ENCODE measurements at regions of chr13 and their contacts with region 1.

Region 1: DNA sequence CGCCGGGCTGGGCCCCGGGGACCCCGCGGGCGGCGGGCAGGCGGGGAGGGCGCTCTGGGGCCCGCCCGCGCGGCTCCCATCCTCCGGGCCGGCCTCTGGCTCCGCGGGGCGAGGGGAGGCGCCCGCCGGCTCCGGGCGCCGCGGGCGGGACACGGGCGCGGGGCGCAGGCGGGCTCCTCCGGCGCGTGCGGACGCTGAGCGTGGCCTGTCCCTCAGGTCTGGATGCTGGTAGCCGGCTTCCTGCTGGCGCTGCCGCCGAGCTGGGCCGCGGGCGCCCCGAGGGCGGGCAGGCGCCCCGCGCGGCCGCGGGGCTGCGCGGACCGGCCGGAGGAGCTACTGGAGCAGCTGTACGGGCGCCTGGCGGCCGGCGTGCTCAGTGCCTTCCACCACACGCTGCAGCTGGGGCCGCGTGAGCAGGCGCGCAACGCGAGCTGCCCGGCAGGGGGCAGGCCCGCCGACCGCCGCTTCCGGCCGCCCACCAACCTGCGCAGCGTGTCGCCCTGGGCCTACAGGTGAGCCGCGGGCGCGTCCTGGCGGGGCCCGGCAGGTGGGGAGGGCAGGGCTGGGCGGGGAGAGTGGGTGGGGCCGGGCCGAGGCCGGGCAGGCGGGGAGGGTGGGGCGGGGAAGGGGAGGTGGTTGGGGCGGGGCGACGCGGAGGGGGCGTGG is 414 bp downstream of the IL17D start:
- DNase-seq: peak; percentile 92
- H3K4me3 Mint-ChIP-seq: no peak overlapping the region
- H3K27ac Mint-ChIP-seq: no peak overlapping the region
- H3K4me1 Mint-ChIP-seq: peaks cover 10% of the 10 kb centered on the region
- H3K27me3 Mint-ChIP-seq: peaks cover 41% of the 10 kb centered on the region

Region 2: DNA sequence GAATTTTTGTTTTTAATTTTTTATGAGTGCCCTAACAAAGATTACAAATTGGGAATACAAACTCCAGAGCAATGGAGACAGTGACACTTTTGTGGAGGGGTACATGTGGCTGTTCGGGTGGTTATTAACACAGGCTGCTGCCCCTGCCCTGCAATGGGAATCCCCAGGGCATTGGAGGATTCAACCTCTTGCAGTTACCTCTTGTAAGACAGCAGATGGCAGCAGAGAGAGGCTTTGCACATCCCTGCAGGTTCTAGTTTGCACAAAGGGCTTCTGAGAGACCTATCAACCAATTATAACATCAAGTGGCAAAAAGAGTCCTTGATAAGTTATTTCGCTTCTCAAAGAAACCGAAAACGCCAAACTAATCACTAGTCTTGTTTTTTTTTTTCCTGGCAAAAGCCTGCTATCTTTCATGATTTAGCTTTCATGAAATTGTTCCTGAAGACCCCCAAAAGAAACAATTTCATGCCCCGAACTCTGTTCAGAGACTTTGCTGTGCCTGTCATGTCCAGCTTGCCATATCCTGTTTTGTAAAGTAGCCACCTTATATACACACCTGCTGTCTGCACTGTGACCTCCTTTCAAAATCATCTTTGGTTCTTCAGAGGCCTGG is 521.6 kb before region 1 on chr13:
- intact Hi-C with region 1: loop called (anchors 5 kb)
- DNase-seq: peak; percentile 85
- H3K4me3 Mint-ChIP-seq: no peak overlapping the region
- H3K27ac Mint-ChIP-seq: no peak overlapping the region
- H3K4me1 Mint-ChIP-seq: no peaks in the 10 kb centered on the region
- H3K27me3 Mint-ChIP-seq: peaks cover 47% of the 10 kb centered on the region

Region 3: GRCh38 chr13:20495082-20496023 is 208.6 kb before region 1 on chr13:
- intact Hi-C with region 1: loop called (anchors 5 kb)
- DNase-seq: peak; percentile 90
- H3K4me3 Mint-ChIP-seq: no peak overlapping the region
- H3K27ac Mint-ChIP-seq: no peak overlapping the region
- H3K4me1 Mint-ChIP-seq: no peaks in the 10 kb centered on the region
- H3K27me3 Mint-ChIP-seq: no peaks in the 10 kb centered on the region

Region 4: GRCh38 chr13:20566898-20567874 is 136.7 kb before region 1 on chr13 and contains the start of gene IFT88:
- intact Hi-C with region 1: loop called (anchors 2 kb)
- DNase-seq: peak; percentile 97
- H3K4me3 Mint-ChIP-seq: peak within 1 kb of the TSS; percentile 91
- H3K27ac Mint-ChIP-seq: peak within 1 kb of the TSS; percentile 88
- H3K4me1 Mint-ChIP-seq: peaks cover 23% of the 10 kb centered on the region
- H3K27me3 Mint-ChIP-seq: no peaks in the 10 kb centered on the region
- total RNA-seq, gene IFT88: 2.2 and 2.9 TPM in 2 replicates

Region 5: DNA sequence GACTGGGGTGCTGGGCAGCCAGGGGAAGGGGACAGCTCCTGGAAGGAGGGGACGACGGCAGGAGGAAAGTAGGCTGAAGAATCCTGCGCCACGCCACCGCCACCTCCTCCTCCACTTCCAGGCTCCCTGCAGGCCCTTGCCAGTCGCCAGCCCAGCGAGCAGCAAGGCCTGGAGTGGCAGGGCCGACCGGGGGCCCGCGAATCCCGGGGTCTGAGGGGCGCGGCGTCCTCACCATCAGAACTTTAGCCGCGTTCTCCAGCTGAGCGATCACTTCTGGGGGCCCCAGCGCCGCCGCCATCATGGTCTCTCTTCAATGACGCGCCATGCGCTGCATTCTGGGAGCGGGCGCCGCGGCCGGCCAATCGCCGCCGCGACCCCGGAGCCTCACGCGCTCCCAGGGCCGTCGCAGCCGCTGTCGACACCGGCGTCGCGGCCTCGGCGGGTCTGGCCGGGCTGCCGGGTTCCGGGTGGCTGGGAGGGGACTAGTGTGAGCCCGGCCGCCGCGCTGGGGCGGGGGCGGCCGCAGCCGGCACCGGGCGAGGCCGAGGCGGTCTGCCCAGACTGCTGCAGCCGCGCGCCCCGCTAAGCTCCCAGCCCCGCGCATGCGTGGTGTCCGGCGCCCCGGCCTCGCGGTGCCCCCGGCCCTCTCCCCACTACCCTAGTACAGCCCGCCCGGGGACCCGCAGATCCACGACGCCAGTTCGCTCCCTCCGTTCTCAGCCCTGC is 198.7 kb after region 1 on chr13 and contains the start of gene XPO4:
- intact Hi-C with region 1: loop called (anchors 10 kb)
- DNase-seq: peak; percentile 95
- H3K4me3 Mint-ChIP-seq: peak within 1 kb of the TSS; percentile 99
- H3K27ac Mint-ChIP-seq: peak within 1 kb of the TSS; percentile 97
- H3K4me1 Mint-ChIP-seq: peaks cover 26% of the 10 kb centered on the region
- H3K27me3 Mint-ChIP-seq: peaks cover 2% of the 10 kb centered on the region
- total RNA-seq, gene XPO4: 32.5 and 34.8 TPM in 2 replicates